ENCODE measurements at regions of chr6 and their contacts with region 1.

Region 1: DNA sequence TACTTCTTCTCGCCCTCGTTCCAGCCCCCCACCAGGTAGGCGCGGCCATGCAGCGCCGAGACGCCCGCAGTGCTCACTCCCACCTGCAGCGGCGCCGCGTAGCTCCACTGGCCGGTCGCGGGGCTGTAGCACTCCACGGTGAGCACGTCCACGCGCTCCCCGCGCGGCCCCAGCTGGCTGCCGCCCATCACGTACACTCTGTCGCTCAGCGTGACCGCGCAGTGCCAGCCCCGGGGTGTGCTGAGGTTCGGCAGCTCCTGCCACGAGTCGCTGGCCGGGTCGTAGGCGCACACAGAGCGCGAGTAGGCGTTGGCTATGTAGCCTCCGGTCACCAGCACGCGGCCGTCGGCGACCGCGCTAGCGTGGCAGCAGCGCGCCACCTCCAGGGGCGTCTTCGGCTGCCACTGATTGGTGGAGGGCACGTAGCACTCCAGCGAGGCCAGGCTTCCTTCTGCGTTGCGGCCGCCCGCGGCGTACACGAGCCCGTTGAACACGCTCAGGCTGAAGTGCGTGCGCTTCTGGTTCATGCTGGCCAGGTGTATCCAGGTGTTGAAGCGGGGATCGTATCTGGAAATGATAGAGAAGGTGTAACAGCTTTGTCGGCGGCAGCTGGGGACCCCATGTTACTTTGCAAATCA is 13.7 kb downstream of the KLHL31 start:
- DNase-seq: peak; percentile 79 to 83 (median 82)
- H3K4me3 ChIP-seq: peak overlapping the region; percentile 64 to 89
- H3K4me3 Mint-ChIP-seq: peak overlapping the region; percentile 87 to 96 (median 93)
- H3K27ac ChIP-seq: peak overlapping the region; percentile 50
- H3K27ac Mint-ChIP-seq: peak overlapping the region; percentile 79 to 95 (median 94)
- H3K4me1 ChIP-seq: peaks cover 22% of the 10 kb centered on the region
- H3K4me1 Mint-ChIP-seq: peaks cover 16 to 47% (median 27%) of the 10 kb centered on the region in 4 donors
- H3K27me3 ChIP-seq: no peaks in the 10 kb centered on the region
- H3K27me3 Mint-ChIP-seq: no peaks in the 10 kb centered on the region

Region 2: DNA sequence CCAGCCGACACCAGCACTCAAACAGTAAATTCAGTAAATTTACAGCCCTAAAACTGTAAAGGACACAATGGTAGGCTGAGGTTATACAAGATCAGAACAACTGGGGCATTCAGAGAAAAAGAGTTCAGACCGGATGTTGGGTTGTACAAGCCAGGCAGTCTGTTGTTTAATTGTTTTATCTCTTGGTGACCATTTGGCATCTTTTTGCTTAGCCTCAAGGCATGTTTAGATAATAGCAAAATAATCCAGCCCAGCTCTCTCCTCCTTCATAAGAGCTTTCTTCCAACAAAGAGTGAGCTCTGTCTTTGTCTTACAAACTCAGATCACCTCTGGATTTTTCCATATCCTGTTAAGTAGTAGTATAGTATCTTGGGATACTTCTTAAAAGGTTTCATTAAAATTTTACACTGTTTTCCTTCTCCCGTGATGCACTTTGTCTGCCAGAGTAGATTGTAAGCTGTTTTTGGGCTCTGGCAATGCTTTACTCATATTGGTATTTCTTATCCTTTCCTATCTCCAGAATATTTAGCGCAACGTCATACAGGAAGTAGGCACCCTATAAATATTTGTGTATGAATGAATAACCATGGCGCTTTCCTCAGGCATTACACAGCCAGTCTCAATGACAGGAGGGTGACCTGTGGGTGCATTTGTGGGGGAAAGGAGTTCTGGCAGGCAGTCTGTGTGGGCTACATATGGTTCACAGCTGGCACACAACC is 1039.4 kb before region 1 on chr6:
- CTCF ChIA-PET with region 1: no interaction called
- POLR2A ChIA-PET with region 1: no interaction called
- intact Hi-C with region 1: no loop called
- DNase-seq: no peak
- H3K4me3 ChIP-seq: no peak overlapping the region
- H3K4me3 Mint-ChIP-seq: no peak overlapping the region
- H3K27ac ChIP-seq: no peak overlapping the region
- H3K27ac Mint-ChIP-seq: no peak overlapping the region
- H3K4me1 ChIP-seq: no peaks in the 10 kb centered on the region
- H3K4me1 Mint-ChIP-seq: peaks cover 0 to 3% (median 0%) of the 10 kb centered on the region in 4 donors
- H3K27me3 ChIP-seq: peaks cover 3% of the 10 kb centered on the region
- H3K27me3 Mint-ChIP-seq: peaks cover 14 to 17% of the 10 kb centered on the region in 2 donors

Region 3: DNA sequence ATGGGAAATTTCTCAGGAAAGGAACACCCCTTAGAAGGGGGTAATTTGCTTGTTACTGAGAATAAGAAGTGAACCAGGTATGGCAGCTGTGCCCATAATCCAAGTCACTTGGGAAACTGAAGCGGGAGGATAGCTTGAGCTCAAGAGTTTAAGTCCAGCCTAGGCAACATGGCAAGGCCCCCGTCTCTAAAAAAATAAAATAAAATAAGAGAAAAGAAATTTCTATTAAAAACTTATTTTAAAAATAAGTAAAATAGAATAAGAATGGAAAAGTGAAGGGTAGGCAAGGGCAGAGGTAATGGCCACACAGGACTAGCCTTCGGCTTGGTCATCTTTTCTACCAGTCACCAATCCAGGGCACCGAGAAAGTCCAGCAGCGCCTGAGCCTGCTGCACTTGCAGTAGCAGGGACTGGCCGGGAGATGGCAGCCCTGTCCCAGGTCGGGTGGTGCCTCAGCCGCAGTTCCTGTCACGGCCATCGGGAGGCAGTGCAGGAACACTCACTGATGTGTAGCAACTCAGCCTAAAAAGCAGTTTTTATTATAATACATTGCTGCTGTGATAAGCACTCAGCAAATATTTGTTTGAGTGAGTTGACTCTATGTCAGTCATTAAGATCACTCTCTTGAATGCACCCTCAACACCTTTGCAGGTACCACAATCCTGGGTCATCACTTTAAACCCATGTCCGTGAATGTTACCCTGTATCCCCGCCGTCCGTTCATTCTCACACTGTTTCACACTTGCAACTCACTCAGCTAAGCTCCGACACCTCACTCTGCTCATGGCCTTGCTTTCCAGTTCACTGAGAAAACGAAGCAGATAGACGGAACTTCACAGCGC is 480.1 kb before region 1 on chr6:
- CTCF ChIA-PET with region 1: interaction called, 3 read pairs
- POLR2A ChIA-PET with region 1: no interaction called
- intact Hi-C with region 1: loop called (anchors 1 kb)
- DNase-seq: peak; percentile 83 to 90 (median 85)
- H3K4me3 ChIP-seq: no peak overlapping the region
- H3K4me3 Mint-ChIP-seq: no peak overlapping the region
- H3K27ac ChIP-seq: no peak overlapping the region
- H3K27ac Mint-ChIP-seq: no peak overlapping the region
- H3K4me1 ChIP-seq: no peaks in the 10 kb centered on the region
- H3K4me1 Mint-ChIP-seq: no peaks in the 10 kb centered on the region
- H3K27me3 ChIP-seq: no peaks in the 10 kb centered on the region
- H3K27me3 Mint-ChIP-seq: no peaks in the 10 kb centered on the region

Region 4: GRCh38 chr6:53492860-53493634 is 158.8 kb before region 1 on chr6:
- CTCF ChIA-PET with region 1: interaction called, 224 read pairs
- POLR2A ChIA-PET with region 1: interaction called, 14 read pairs
- intact Hi-C with region 1: loop called (anchors 1 kb)
- DNase-seq: peak in 4 of 5 donors; percentile 52 to 55 (median 53)
- H3K4me3 ChIP-seq: no peak overlapping the region
- H3K4me3 Mint-ChIP-seq: no peak overlapping the region
- H3K27ac ChIP-seq: no peak overlapping the region
- H3K27ac Mint-ChIP-seq: peak overlapping the region in 1 of 7 donors; percentile 13
- H3K4me1 ChIP-seq: no peaks in the 10 kb centered on the region
- H3K4me1 Mint-ChIP-seq: peaks cover 0 to 3% (median 1%) of the 10 kb centered on the region in 4 donors
- H3K27me3 ChIP-seq: no peaks in the 10 kb centered on the region
- H3K27me3 Mint-ChIP-seq: peaks cover 5 to 6% of the 10 kb centered on the region in 2 donors

Region 5: DNA sequence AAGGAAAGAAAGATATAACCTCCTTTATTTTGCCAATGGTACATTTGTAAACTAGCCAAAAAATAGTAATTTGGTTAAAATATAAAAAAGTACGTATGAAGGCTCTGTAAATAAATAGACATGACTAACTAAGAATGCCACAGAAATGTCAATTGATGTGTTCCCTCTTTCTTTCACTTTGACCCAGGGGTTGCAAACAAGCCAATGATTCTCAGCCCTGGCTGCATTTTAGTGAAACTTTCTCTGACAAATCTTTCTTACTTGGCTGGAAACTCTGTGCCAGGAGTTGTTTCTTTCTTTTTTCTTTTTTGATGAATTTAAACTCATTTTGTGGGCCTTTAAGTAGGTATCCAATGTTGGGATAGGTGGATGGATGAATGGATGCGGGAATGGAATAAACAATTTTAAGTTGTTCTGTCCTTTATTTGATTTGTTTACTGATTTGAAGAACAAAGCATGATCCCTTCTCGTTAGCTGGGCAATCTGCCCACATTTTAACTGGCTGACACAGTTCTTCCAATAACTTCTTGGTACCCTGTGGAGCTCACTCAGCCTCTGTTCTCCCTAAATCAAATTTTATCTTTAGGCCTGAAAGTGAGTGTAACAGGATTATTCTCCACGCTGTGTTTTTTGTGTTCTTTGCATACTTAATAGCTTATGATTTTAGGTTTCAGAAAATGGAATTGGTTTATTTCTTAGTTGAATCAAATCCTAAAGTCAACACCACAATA is 48.3 kb before region 1 on chr6:
- CTCF ChIA-PET with region 1: no interaction called
- POLR2A ChIA-PET with region 1: no interaction called
- intact Hi-C with region 1: no loop called
- DNase-seq: no peak
- H3K4me3 ChIP-seq: no peak overlapping the region
- H3K4me3 Mint-ChIP-seq: no peak overlapping the region
- H3K27ac ChIP-seq: no peak overlapping the region
- H3K27ac Mint-ChIP-seq: no peak overlapping the region
- H3K4me1 ChIP-seq: no peaks in the 10 kb centered on the region
- H3K4me1 Mint-ChIP-seq: no peaks in the 10 kb centered on the region
- H3K27me3 ChIP-seq: no peaks in the 10 kb centered on the region
- H3K27me3 Mint-ChIP-seq: no peaks in the 10 kb centered on the region

Region 6: GRCh38 chr6:53635322-53635721 is 16.6 kb before region 1 on chr6:
- CTCF ChIA-PET with region 1: interaction called, 15 read pairs
- POLR2A ChIA-PET with region 1: interaction called, 6 read pairs
- intact Hi-C with region 1: no loop called
- DNase-seq: no peak
- H3K4me3 ChIP-seq: no peak overlapping the region
- H3K4me3 Mint-ChIP-seq: no peak overlapping the region
- H3K27ac ChIP-seq: no peak overlapping the region
- H3K27ac Mint-ChIP-seq: no peak overlapping the region
- H3K4me1 ChIP-seq: no peaks in the 10 kb centered on the region
- H3K4me1 Mint-ChIP-seq: peaks cover 0 to 7% (median 3%) of the 10 kb centered on the region in 4 donors
- H3K27me3 ChIP-seq: no peaks in the 10 kb centered on the region
- H3K27me3 Mint-ChIP-seq: peaks cover 0 to 4% of the 10 kb centered on the region in 2 donors

Region 7: GRCh38 chr6:53664623-53665022 is 12.7 kb after region 1 on chr6:
- CTCF ChIA-PET with region 1: interaction called, 25 read pairs
- POLR2A ChIA-PET with region 1: interaction called, 7 read pairs
- intact Hi-C with region 1: no loop called
- DNase-seq: no peak
- H3K4me3 ChIP-seq: no peak overlapping the region
- H3K4me3 Mint-ChIP-seq: no peak overlapping the region
- H3K27ac ChIP-seq: no peak overlapping the region
- H3K27ac Mint-ChIP-seq: no peak overlapping the region
- H3K4me1 ChIP-seq: no peaks in the 10 kb centered on the region
- H3K4me1 Mint-ChIP-seq: no peaks in the 10 kb centered on the region
- H3K27me3 ChIP-seq: peaks cover 5% of the 10 kb centered on the region
- H3K27me3 Mint-ChIP-seq: peaks cover 15 to 34% of the 10 kb centered on the region in 2 donors

Region 8: GRCh38 chr6:53894091-53894490 is 242.2 kb after region 1 on chr6:
- CTCF ChIA-PET with region 1: no interaction called
- POLR2A ChIA-PET with region 1: no interaction called
- intact Hi-C with region 1: no loop called
- DNase-seq: peak in 4 of 5 donors; percentile 1 to 13 (median 8)
- H3K4me3 ChIP-seq: no peak overlapping the region
- H3K4me3 Mint-ChIP-seq: no peak overlapping the region
- H3K27ac ChIP-seq: no peak overlapping the region
- H3K27ac Mint-ChIP-seq: peak overlapping the region in 1 of 7 donors; percentile 49
- H3K4me1 ChIP-seq: peaks cover 5% of the 10 kb centered on the region
- H3K4me1 Mint-ChIP-seq: peaks cover 6 to 7% (median 7%) of the 10 kb centered on the region in 4 donors
- H3K27me3 ChIP-seq: no peaks in the 10 kb centered on the region
- H3K27me3 Mint-ChIP-seq: no peaks in the 10 kb centered on the region

Region 9: GRCh38 chr6:53947780-53948179 is 295.9 kb after region 1 on chr6:
- CTCF ChIA-PET with region 1: no interaction called
- POLR2A ChIA-PET with region 1: no interaction called
- intact Hi-C with region 1: no loop called
- DNase-seq: no peak
- H3K4me3 ChIP-seq: no peak overlapping the region
- H3K4me3 Mint-ChIP-seq: no peak overlapping the region
- H3K27ac ChIP-seq: no peak overlapping the region
- H3K27ac Mint-ChIP-seq: no peak overlapping the region
- H3K4me1 ChIP-seq: no peaks in the 10 kb centered on the region
- H3K4me1 Mint-ChIP-seq: no peaks in the 10 kb centered on the region
- H3K27me3 ChIP-seq: no peaks in the 10 kb centered on the region
- H3K27me3 Mint-ChIP-seq: peaks cover 3 to 6% of the 10 kb centered on the region in 2 donors